Prostate gland (tissue), 2 donors: ENCODE measurements at regions of chr1 and their contacts with region 1.

Region 1: GRCh38 chr1:64242895-64243756 is 39.7 kb downstream of the UBE2U start:
- DNase-seq: no peak
- H3K4me3 ChIP-seq: no peak overlapping the region
- H3K27ac ChIP-seq: no peak overlapping the region
- H3K4me1 ChIP-seq: no peaks in the 10 kb centered on the region
- H3K27me3 ChIP-seq: no peaks in the 10 kb centered on the region
- CTCF ChIP-seq: peak; percentile 12 to 73 (median 64)
- POLR2A ChIP-seq: no peak

Region 2: DNA sequence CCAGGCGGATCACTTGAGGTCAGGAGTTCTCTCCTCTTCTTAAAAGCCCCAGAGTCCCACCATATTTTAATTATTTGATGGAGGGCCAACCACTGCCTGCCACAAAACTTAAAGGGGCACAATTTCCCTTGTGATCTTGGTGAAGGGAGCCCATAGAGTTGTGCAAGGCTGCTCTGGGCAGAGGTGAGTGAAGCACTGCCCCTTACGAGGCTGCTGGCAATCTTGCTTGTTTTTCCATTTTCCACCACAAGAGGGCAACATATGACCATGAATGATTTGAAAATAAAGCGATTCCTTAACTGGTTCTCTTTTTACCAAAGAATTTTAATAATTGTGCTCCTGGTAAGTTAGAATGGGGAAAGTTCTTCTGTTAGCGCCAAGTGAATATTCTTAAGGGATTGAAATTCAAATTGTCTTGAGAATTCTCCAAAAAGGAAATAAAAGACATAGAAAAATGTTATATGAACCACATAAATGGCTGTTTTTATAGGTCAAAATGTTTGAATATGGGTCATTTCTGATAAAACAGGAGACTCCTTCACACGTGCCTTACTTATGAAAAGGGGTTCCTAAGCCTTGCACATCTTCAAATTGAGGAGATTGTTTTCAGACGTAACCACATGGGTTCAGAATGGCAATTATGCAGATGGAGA is 627.2 kb before region 1 on chr1:
- intact Hi-C with region 1: loop called (anchors 5 kb)
- DNase-seq: peak; percentile 72
- H3K4me3 ChIP-seq: no peak overlapping the region
- H3K27ac ChIP-seq: no peak overlapping the region
- H3K4me1 ChIP-seq: no peaks in the 10 kb centered on the region
- H3K27me3 ChIP-seq: no peaks in the 10 kb centered on the region
- CTCF ChIP-seq: peak; percentile 61 to 81 (median 78)
- POLR2A ChIP-seq: no peak

Region 3: GRCh38 chr1:63674238-63674864 is 568.8 kb before region 1 on chr1:
- intact Hi-C with region 1: loop called (anchors 5 kb)
- DNase-seq: peak; percentile 26
- H3K4me3 ChIP-seq: no peak overlapping the region
- H3K27ac ChIP-seq: peak overlapping the region in 1 of 2 donors; percentile 53
- H3K4me1 ChIP-seq: no peaks in the 10 kb centered on the region
- H3K27me3 ChIP-seq: no peaks in the 10 kb centered on the region
- CTCF ChIP-seq: peak; percentile 11 to 59 (median 45)
- POLR2A ChIP-seq: no peak

Region 4: GRCh38 chr1:63691701-63692425 is 551.3 kb before region 1 on chr1:
- intact Hi-C with region 1: loop called (anchors 5 kb)
- DNase-seq: peak; percentile 66
- H3K4me3 ChIP-seq: no peak overlapping the region
- H3K27ac ChIP-seq: peak overlapping the region in 1 of 2 donors; percentile 21
- H3K4me1 ChIP-seq: no peaks in the 10 kb centered on the region
- H3K27me3 ChIP-seq: no peaks in the 10 kb centered on the region
- CTCF ChIP-seq: peak; percentile 43 to 82 (median 72)
- POLR2A ChIP-seq: no peak

Region 5: GRCh38 chr1:64092851-64093371 is 150.2 kb before region 1 on chr1:
- intact Hi-C with region 1: no loop called
- DNase-seq: no peak
- H3K4me3 ChIP-seq: no peak overlapping the region
- H3K27ac ChIP-seq: no peak overlapping the region
- H3K4me1 ChIP-seq: no peaks in the 10 kb centered on the region
- H3K27me3 ChIP-seq: no peaks in the 10 kb centered on the region
- CTCF ChIP-seq: no peak
- POLR2A ChIP-seq: no peak

Region 6: DNA sequence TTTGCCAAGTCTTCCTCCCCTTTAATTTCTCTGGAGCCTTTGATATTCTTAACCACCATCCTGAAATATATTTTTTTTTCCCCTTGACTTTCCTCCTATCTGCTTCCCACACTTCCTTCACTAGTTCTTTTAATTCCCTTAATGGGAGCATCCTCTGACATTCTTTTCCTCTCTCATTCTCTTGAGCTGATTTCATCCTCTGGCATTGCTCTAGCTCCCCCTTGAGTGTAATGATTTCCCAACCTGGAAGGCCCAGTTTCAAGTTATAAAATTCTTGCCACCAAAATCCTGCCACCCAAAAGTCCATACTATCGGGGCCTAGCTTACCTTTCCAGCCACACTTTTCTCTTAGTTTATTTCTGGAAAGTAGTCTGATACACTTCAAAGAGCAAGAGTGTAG is 79.2 kb before region 1 on chr1:
- intact Hi-C with region 1: loop called (anchors 10 kb)
- DNase-seq: no peak
- H3K4me3 ChIP-seq: no peak overlapping the region
- H3K27ac ChIP-seq: no peak overlapping the region
- H3K4me1 ChIP-seq: no peaks in the 10 kb centered on the region
- H3K27me3 ChIP-seq: no peaks in the 10 kb centered on the region
- CTCF ChIP-seq: peak in 2 of 4 experiments; percentile 25 to 34
- POLR2A ChIP-seq: no peak

Region 7: DNA sequence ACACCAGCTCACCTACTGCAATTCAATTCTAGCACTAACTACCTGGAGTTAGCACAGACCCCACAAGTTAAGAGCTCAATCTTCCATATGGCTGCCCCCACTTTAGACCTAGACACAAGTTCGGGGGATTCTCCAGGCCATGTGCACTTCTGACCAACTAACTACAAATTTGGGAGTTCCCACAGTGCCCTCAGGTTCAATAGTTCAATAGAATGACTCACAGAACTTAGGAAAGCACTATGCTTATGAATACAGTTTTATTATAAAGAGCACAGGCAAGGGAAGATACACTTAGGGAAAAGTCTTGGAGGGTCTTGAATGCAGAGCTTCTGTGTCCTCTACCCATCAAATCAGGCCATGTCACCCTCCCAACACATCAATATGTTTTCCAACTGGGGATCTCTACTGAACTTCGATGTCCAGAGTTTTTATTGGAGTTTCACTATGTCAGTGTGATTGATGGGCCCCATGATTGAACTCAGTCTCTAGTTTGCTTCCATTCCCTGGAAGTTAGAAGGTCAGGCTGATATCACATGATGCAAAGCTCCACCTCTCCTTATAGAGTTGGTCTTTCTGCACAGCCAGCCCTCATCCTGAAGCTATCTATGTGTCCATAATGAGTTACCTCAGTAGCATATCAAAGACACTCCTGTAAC is 547.8 kb after region 1 on chr1:
- intact Hi-C with region 1: no loop called
- DNase-seq: no peak
- H3K4me3 ChIP-seq: no peak overlapping the region
- H3K27ac ChIP-seq: no peak overlapping the region
- H3K4me1 ChIP-seq: no peaks in the 10 kb centered on the region
- H3K27me3 ChIP-seq: no peaks in the 10 kb centered on the region
- CTCF ChIP-seq: no peak
- POLR2A ChIP-seq: no peak